Left ventricle myocardium superior (tissue), 1 donor: ENCODE measurements at regions of chr7 and their contacts with region 1.

Region 1: GRCh38 chr7:37833107-37833817 is 15.1 kb upstream of the NME8 start:
- DNase-seq: peak; percentile 41
- ATAC-seq: peak; percentile 50

Region 2: DNA sequence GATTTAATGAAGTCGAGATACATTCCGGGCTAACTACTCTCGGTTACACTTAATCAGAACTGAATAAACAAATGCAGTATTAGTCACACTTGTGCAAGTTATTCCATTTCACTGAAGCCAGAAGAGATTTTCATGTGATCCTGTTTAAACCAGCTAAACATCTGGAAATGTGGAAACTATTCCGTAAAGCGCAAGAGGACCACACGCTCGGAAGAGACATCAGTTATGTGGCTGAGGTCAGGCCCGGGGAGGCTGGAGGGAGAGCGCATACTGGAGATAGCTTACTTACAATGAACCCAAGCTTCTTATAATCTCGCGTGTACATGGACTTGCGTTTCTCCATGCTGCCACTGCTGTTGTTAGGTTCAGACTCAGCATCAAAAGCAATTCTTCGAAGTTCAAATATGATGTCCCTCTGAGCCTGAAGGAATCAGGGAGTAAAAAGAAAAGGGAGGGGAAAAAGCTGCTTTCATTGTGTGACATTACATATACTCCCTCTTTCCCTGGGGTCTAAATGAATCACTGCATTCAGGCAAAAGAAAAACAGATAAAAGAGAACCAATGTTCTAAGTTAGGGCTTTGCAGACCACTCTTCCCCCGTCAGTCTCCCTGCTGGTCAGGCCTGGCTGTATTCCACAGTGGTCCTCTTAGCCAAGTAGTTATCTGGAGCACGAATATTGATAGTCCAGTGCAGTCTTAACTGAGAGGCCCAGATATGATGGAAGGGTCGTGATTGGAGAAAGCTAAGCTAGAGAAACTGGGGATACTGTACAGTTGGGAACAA is 622.0 kb before region 1 on chr7:
- intact Hi-C with region 1: loop called (anchors 10 kb)
- DNase-seq: peak; percentile 61
- ATAC-seq: peak; percentile 86

Region 3: GRCh38 chr7:37633048-37633447 is 200.2 kb before region 1 on chr7:
- intact Hi-C with region 1: loop called (anchors 5 kb)
- DNase-seq: no peak
- ATAC-seq: no peak

Region 4: GRCh38 chr7:37815671-37816371 is 17.4 kb before region 1 on chr7:
- intact Hi-C with region 1: no loop called
- DNase-seq: no peak
- ATAC-seq: no peak